ENCODE measurements at regions of chrX and their contacts with region 1.

Region 1: DNA sequence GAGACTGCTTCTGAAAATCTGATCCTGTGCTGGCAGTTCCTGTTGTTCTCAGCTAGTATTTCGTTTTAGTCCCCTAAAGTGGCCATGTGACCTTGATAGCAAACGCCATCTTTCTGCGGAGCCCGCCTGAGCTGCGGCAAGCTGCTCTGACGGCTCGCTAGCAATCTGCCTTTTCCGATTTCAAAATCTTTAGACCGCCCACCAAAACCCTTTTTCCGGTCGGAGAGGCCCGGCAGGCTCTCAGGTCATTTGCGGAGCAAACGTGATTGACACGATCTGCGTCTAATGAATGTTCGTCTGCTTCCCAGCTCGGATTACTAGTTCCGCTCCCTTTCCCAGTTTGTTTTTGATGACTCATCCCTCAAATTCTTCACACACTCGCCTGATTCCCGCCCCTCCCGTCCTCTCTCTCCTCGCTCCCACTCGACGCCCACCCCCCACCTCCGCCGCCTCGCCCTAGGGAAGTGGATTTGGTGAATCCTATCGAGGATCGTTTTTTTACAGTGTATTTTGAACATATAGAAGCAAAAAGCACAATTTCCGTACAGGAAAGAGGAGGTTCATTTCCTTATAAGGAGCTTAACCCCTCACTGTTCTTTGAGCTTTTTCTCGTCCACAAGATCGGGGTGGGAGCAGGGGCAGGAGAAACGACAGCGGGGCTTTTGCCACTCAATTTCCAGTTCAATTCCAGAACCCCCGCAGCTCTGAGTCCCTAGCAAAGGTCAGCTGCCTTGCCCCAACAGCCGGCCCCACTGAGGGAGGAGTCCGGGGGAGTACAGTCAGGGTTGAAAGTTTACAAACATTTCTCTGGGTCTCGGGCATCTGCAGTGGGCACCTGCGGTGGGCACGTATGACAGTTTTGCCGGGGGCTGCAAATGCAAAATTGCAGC is 37.5 kb downstream of the NLGN3 start:
- DNase-seq: peak; percentile 89
- ATAC-seq: peak; percentile 97
- H3K4me3 Mint-ChIP-seq: peak overlapping the region; percentile 86
- H3K27ac Mint-ChIP-seq: peak overlapping the region; percentile 97
- H3K4me1 Mint-ChIP-seq: peaks cover 13% of the 10 kb centered on the region
- H3K27me3 Mint-ChIP-seq: no peaks in the 10 kb centered on the region

Region 2: GRCh38 chrX:70433848-70434351 is 748.3 kb before region 1 on chrX:
- CTCF ChIA-PET with region 1: no interaction called
- POLR2A ChIA-PET with region 1: no interaction called
- intact Hi-C with region 1: loop called in 1 of 2 experiments (anchors 5 kb)
- DNase-seq: peak; percentile 86
- ATAC-seq: peak; percentile 80
- H3K4me3 Mint-ChIP-seq: peak overlapping the region; percentile 85
- H3K27ac Mint-ChIP-seq: peak overlapping the region; percentile 89
- H3K4me1 Mint-ChIP-seq: peaks cover 11% of the 10 kb centered on the region
- H3K27me3 Mint-ChIP-seq: peaks cover 14% of the 10 kb centered on the region

Region 3: GRCh38 chrX:70921709-70922352 is 260.3 kb before region 1 on chrX:
- CTCF ChIA-PET with region 1: no interaction called
- POLR2A ChIA-PET with region 1: no interaction called
- intact Hi-C with region 1: no loop called
- DNase-seq: no peak
- ATAC-seq: no peak
- H3K4me3 Mint-ChIP-seq: no peak overlapping the region
- H3K27ac Mint-ChIP-seq: no peak overlapping the region
- H3K4me1 Mint-ChIP-seq: peaks cover 5% of the 10 kb centered on the region
- H3K27me3 Mint-ChIP-seq: peaks cover 5% of the 10 kb centered on the region

Region 4: DNA sequence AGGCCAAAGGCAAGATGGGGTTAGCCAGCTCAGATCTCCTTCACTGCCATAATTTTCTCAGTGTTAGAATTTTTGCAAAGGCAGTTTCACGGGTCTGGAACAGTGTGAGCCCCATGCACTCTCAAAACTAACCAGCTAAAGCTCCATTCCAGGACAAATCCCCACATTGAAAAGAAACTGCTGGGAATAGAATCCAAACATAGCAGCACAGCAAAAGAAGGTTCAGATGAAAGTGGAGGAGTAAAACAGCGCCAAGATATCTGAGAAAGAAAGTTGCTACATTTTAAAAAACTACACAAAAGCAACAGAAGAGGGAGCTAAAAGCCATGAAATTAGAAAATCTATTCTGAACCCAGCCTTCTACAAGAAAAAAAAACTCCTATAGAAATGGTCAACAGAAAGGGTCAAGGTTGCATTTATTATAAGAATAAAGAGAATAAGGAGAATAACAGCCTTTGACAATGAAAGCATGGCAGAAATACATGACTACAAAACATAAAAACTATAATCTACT is 211.6 kb before region 1 on chrX:
- CTCF ChIA-PET with region 1: interaction called, 14 read pairs
- POLR2A ChIA-PET with region 1: no interaction called
- intact Hi-C with region 1: loop called (anchors 1 to 2 kb)
- DNase-seq: no peak
- ATAC-seq: no peak
- H3K4me3 Mint-ChIP-seq: no peak overlapping the region
- H3K27ac Mint-ChIP-seq: no peak overlapping the region
- H3K4me1 Mint-ChIP-seq: peaks cover 3% of the 10 kb centered on the region
- H3K27me3 Mint-ChIP-seq: no peaks in the 10 kb centered on the region

Region 5: GRCh38 chrX:71068049-71068763 is 113.9 kb before region 1 on chrX and contains the start of gene SNX12:
- CTCF ChIA-PET with region 1: no interaction called
- POLR2A ChIA-PET with region 1: interaction called, 3 read pairs
- intact Hi-C with region 1: loop called in 1 of 2 experiments (anchors 1 kb)
- DNase-seq: peak; percentile 92
- ATAC-seq: peak; percentile 93
- H3K4me3 Mint-ChIP-seq: peak within 1 kb of the TSS; percentile 91
- H3K27ac Mint-ChIP-seq: peak within 1 kb of the TSS; percentile 93
- H3K4me1 Mint-ChIP-seq: peaks cover 17% of the 10 kb centered on the region
- H3K27me3 Mint-ChIP-seq: no peaks in the 10 kb centered on the region
- total RNA-seq, gene SNX12: 43.2 to 44.6 TPM

Region 6: DNA sequence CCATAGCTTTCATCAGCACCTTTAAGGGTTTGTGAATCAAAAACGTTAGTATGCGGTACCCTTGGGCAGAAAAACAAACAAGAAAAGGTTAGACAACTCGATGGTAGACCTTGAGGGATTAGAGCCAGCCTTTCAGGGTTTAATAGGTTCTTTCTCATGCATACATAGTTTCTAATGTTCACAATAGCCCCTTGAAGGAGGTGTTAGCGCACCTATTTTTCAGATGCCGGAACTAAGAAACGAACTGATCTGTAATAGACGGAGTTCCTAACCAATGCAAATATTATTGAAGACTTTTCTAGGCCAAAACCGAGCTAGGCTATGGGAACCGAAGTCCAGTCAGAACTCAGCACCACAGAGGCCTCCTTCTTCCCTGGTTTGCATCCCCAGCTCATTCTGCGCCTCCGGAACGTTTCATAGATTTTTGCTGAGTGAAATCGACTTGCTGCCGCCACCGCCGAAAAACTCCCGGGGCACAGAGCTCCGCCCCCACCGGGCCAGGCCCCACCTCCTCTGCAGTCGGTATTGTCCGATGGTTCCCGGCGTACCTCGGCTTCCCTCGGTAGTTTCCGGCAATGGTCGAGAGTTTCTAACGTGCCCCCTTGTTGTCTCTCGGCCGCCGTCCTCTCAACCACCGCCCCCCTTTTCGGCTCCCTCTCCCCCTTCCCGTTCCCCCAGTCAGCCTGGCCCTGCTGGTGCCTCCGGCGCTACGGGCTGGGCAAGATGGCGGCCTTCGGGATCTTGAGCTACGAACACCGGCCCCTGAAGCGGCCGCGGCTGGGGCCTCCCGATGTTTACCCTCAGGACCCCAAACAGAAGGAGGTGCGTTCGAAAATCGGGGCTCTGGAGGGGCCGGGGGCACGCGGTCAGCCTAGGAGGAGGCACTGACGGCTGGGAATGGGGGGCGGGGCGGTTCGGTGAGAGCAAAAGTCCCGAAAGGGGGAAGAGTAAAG is 63.8 kb before region 1 on chrX and contains the start of gene MED12:
- CTCF ChIA-PET with region 1: interaction called, 4 read pairs
- POLR2A ChIA-PET with region 1: interaction called, 3 read pairs
- intact Hi-C with region 1: loop called (anchors 1 to 5 kb)
- DNase-seq: peak; percentile 91
- ATAC-seq: peak; percentile 98
- H3K4me3 Mint-ChIP-seq: peak within 1 kb of the TSS; percentile 79
- H3K27ac Mint-ChIP-seq: peak within 1 kb of the TSS; percentile 87
- H3K4me1 Mint-ChIP-seq: peaks cover 23% of the 10 kb centered on the region
- H3K27me3 Mint-ChIP-seq: no peaks in the 10 kb centered on the region
- total RNA-seq, gene MED12: 46.2 to 56.4 TPM

Region 7: GRCh38 chrX:71216485-71216884 is 34.3 kb after region 1 on chrX:
- CTCF ChIA-PET with region 1: no interaction called
- POLR2A ChIA-PET with region 1: no interaction called
- intact Hi-C with region 1: no loop called
- DNase-seq: no peak
- ATAC-seq: no peak
- H3K4me3 Mint-ChIP-seq: no peak overlapping the region
- H3K27ac Mint-ChIP-seq: no peak overlapping the region
- H3K4me1 Mint-ChIP-seq: peaks cover 3% of the 10 kb centered on the region
- H3K27me3 Mint-ChIP-seq: no peaks in the 10 kb centered on the region

Region 8: DNA sequence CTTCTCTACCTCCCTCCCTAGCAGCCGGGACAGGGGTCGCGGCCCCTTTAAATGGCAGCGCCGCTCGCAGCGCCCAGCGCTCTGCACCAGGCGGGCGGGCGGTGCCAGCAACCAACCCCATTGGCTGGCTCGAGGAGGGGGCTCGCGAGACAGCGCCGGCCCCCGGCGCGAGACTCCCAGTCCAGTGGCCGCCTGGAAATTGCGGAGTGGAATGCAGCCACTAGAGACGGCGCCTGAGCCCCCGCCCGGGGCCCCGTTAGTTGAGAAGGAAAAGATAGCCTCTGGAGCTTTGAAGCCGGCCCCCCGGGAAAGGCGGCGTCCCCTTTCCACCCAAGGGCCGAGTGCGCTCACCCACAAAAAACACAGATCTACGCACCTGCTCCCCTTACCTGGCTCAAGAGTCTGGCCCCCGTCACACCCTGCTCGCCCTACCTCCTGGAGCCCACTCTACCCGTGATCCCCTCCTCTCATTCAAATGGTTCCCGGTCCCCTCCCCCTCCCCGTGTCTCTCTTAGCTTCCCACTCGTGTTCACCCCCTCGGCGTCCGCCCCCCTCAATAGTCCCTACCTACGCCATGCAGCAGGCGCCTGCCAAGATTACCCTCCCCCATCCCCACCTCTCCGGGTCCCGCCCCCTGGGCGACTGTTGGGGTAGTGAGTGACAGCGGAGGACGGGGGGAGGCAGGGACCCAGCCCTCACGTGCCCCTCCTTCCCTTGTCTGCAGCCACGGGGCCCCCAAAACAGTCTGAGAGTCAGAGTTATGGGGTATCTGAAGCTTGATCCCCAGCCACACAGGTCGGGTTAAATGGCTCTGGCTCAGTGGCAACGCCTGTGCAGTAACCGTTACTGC is 72.2 kb after region 1 on chrX and contains the start of gene ZMYM3:
- CTCF ChIA-PET with region 1: interaction called, 3 read pairs
- POLR2A ChIA-PET with region 1: no interaction called
- intact Hi-C with region 1: loop called in 1 of 2 experiments (anchors 1 kb)
- DNase-seq: peak; percentile 87
- ATAC-seq: peak; percentile 86
- H3K4me3 Mint-ChIP-seq: peak within 1 kb of the TSS; percentile 84
- H3K27ac Mint-ChIP-seq: peak within 1 kb of the TSS; percentile 83
- H3K4me1 Mint-ChIP-seq: peaks cover 29% of the 10 kb centered on the region
- H3K27me3 Mint-ChIP-seq: no peaks in the 10 kb centered on the region
- total RNA-seq, gene ZMYM3: 22.6 to 22.8 TPM

Region 9: DNA sequence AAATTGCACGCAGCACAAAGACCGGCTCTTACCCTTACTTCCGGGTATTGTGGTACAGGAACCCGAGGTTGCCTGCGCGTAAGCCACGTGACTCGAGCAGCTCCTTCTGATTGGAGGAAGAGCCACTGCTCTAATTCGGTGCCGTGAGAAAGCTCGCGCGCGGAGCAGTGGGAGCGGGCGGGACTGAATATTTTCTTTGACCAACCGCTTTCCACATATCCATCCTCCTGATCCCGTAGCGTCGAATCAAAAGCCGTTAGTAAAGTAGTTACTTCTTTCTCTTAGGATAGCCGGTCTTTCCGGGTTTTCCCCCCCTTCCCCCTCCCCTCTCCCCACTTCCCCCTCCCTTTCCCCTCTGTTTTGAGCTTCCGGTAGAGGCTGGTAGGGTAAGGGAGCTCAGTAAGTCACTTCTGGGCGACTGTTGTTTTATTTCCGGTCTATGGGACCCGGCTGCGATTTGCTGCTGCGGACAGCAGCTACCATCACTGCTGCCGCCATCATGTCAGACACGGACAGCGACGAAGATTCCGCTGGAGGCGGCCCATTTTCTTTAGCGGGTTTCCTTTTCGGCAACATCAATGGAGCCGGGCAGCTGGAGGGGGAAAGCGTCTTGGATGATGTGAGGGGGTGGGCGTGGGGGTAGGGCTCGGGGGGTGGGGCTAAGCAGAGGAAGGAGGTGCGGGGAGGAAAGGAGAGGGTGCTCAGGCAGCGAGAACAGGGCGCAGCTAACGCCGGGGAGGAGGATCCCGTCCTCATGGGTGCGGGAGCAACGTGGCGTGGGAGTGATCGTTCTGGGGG is 183.9 kb after region 1 on chrX and contains the start of gene TAF1:
- CTCF ChIA-PET with region 1: interaction called, 3 read pairs
- POLR2A ChIA-PET with region 1: interaction called, 12 read pairs
- intact Hi-C with region 1: loop called (anchors 1 to 10 kb)
- DNase-seq: peak; percentile 95
- ATAC-seq: peak; percentile 92
- H3K4me3 Mint-ChIP-seq: peak within 1 kb of the TSS; percentile 92
- H3K27ac Mint-ChIP-seq: peak within 1 kb of the TSS; percentile 98
- H3K4me1 Mint-ChIP-seq: peaks cover 20% of the 10 kb centered on the region
- H3K27me3 Mint-ChIP-seq: no peaks in the 10 kb centered on the region
- total RNA-seq, gene TAF1: 36.6 to 41.2 TPM

Measured in activated CD4-positive, alpha-beta T cell treated with anti-CD3 and anti-CD28 coated beads for 36 hours (primary cell).